A673 (cell line): ENCODE measurements at regions of chr17 and their contacts with region 1.

Region 1: DNA sequence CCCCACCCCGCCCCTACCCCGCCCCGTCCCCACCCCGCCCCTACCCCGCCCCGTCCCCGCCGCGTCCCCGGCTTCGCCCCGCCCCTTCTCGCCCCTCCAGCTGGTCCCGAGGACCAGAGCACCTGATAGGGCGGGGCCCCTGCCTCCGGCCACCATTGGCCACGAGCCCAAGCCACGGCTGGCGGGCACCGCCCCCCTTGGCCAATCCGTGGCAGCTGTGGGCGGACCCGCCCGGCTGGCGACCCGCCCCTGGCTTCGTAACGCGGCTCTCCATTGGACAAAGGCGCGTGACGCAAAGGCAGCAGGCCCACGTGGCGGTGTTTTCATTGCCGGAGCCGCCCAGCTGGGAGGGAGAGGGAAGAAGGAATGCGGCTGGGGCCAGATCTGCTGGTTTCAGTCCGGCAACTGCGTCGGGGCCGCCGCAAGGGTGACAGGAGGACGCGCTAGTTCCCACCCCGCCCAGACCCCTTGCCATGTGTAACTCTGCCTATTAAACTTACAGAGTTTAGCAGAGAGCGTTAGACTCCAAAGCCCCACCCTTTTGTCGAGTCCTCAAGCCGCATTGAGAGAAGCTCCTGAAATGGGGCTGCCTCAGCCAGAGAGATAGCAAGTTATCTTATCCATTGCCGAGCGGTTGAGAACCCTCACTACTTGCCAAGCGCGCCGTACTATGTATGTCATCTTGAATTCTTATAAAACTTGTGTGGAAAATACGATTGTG is 403 bp upstream of the WIPI1 start:
- DNase-seq: peak; percentile 98
- H3K4me3 ChIP-seq: peak overlapping the region; percentile 43
- H3K27ac ChIP-seq: no peak overlapping the region
- H3K4me1 ChIP-seq: peaks cover 13% of the 10 kb centered on the region
- H3K27me3 ChIP-seq: peaks cover 20% of the 10 kb centered on the region
- CTCF ChIP-seq: no peak

Region 2: GRCh38 chr17:67959288-67959900 is 498.3 kb before region 1 on chr17:
- CTCF ChIA-PET with region 1: interaction called, 4 read pairs
- POLR2A ChIA-PET with region 1: no interaction called
- intact Hi-C with region 1: loop called (anchors 5 kb)
- DNase-seq: no peak
- H3K4me3 ChIP-seq: no peak overlapping the region
- H3K27ac ChIP-seq: no peak overlapping the region
- H3K4me1 ChIP-seq: no peaks in the 10 kb centered on the region
- H3K27me3 ChIP-seq: no peaks in the 10 kb centered on the region
- CTCF ChIP-seq: no peak

Region 3: DNA sequence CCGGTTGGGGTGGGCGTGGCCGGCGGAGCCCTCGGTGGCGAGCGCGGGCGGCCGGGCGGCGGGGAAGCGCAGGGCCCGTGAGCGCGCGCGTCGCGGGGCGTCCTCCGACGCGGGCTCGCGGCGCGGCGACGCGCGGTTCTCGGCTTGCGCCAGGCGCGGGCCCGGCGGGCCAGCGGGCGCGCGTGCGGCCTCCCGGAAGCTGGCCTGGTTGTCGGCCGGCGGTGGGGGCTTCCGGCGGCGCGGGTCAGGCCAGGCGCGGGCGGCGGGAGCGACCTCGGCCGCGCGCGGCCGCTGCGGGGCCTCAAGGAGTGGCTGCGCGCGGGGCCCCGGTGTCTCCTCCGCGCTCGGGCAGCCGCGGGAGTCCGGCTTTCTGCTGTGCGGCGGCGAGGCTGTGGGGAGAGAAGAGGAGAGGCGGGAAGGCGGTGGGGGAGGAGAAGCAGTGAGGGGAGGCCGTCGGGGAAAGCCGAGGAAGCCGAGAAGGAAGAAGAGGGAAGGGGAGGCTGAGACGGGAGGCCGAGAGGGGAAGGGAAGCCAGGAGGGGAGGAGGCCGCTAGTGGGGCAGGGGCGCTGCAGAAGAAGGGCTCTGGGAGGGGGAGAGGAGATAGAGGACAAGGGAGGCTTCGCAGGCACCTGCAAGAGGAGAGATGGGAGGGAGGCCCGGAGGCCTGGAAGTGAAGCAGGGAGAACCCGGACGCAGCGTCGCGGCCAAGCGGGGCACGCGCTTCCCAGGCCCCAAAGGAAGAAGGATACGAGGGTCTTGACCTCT is 463.9 kb before region 1 on chr17:
- CTCF ChIA-PET with region 1: interaction called, 12 read pairs
- POLR2A ChIA-PET with region 1: no interaction called
- intact Hi-C with region 1: no loop called
- DNase-seq: peak; percentile 91
- H3K4me3 ChIP-seq: peak overlapping the region; percentile 83
- H3K27ac ChIP-seq: peak overlapping the region; percentile 93
- H3K4me1 ChIP-seq: peaks cover 10% of the 10 kb centered on the region
- H3K27me3 ChIP-seq: no peaks in the 10 kb centered on the region
- CTCF ChIP-seq: no peak

Region 4: GRCh38 chr17:68172461-68172954 is 285.2 kb before region 1 on chr17:
- CTCF ChIA-PET with region 1: no interaction called
- POLR2A ChIA-PET with region 1: no interaction called
- intact Hi-C with region 1: loop called (anchors 2 kb)
- DNase-seq: peak; percentile 75
- H3K4me3 ChIP-seq: no peak overlapping the region
- H3K27ac ChIP-seq: no peak overlapping the region
- H3K4me1 ChIP-seq: no peaks in the 10 kb centered on the region
- H3K27me3 ChIP-seq: no peaks in the 10 kb centered on the region
- CTCF ChIP-seq: peak; percentile 93

Region 5: GRCh38 chr17:68398691-68399637 is 58.7 kb before region 1 on chr17:
- CTCF ChIA-PET with region 1: no interaction called
- POLR2A ChIA-PET with region 1: no interaction called
- intact Hi-C with region 1: loop called (anchors 10 kb)
- DNase-seq: peak; percentile 40
- H3K4me3 ChIP-seq: no peak overlapping the region
- H3K27ac ChIP-seq: no peak overlapping the region
- H3K4me1 ChIP-seq: peaks cover 16% of the 10 kb centered on the region
- H3K27me3 ChIP-seq: no peaks in the 10 kb centered on the region
- CTCF ChIP-seq: peak; percentile 64